ENCODE measurements at regions of chr4 and their contacts with region 1.

Region 1: GRCh38 chr4:25913851-25914669 is at the start of gene SMIM20:
- DNase-seq: peak; percentile 89
- H3K4me3 Mint-ChIP-seq: peak within 1 kb of the TSS; percentile 96
- H3K27ac Mint-ChIP-seq: peak within 1 kb of the TSS; percentile 97
- H3K4me1 Mint-ChIP-seq: peaks cover 17% of the 10 kb centered on the region
- H3K27me3 Mint-ChIP-seq: no peaks in the 10 kb centered on the region
- total RNA-seq, gene SMIM20: 28.1 to 33.2 TPM

Region 2: GRCh38 chr4:25234390-25235370 is 679.4 kb before region 1 on chr4:
- CTCF ChIA-PET with region 1: no interaction called
- intact Hi-C with region 1: loop called (anchors 1 kb)
- DNase-seq: peak; percentile 63
- H3K4me3 Mint-ChIP-seq: peak overlapping the region; percentile 92
- H3K27ac Mint-ChIP-seq: peak overlapping the region; percentile 91
- H3K4me1 Mint-ChIP-seq: peaks cover 40% of the 10 kb centered on the region
- H3K27me3 Mint-ChIP-seq: no peaks in the 10 kb centered on the region

Region 3: GRCh38 chr4:25466966-25467697 is 446.9 kb before region 1 on chr4:
- CTCF ChIA-PET with region 1: no interaction called
- intact Hi-C with region 1: no loop called
- DNase-seq: no peak
- H3K4me3 Mint-ChIP-seq: no peak overlapping the region
- H3K27ac Mint-ChIP-seq: no peak overlapping the region
- H3K4me1 Mint-ChIP-seq: no peaks in the 10 kb centered on the region
- H3K27me3 Mint-ChIP-seq: no peaks in the 10 kb centered on the region

Region 4: GRCh38 chr4:25842229-25842845 is 71.7 kb before region 1 on chr4:
- CTCF ChIA-PET with region 1: no interaction called
- intact Hi-C with region 1: loop called (anchors 5 kb)
- DNase-seq: peak; percentile 65
- H3K4me3 Mint-ChIP-seq: no peak overlapping the region
- H3K27ac Mint-ChIP-seq: no peak overlapping the region
- H3K4me1 Mint-ChIP-seq: peaks cover 40% of the 10 kb centered on the region
- H3K27me3 Mint-ChIP-seq: no peaks in the 10 kb centered on the region

Region 5: GRCh38 chr4:25938787-25939186 is 24.7 kb after region 1 on chr4:
- CTCF ChIA-PET with region 1: interaction called, 5 read pairs
- intact Hi-C with region 1: loop called (anchors 1 kb)
- DNase-seq: peak; percentile 68
- H3K4me3 Mint-ChIP-seq: no peak overlapping the region
- H3K27ac Mint-ChIP-seq: peak overlapping the region; percentile 5
- H3K4me1 Mint-ChIP-seq: peaks cover 20% of the 10 kb centered on the region
- H3K27me3 Mint-ChIP-seq: peaks cover 15% of the 10 kb centered on the region

Region 6: DNA sequence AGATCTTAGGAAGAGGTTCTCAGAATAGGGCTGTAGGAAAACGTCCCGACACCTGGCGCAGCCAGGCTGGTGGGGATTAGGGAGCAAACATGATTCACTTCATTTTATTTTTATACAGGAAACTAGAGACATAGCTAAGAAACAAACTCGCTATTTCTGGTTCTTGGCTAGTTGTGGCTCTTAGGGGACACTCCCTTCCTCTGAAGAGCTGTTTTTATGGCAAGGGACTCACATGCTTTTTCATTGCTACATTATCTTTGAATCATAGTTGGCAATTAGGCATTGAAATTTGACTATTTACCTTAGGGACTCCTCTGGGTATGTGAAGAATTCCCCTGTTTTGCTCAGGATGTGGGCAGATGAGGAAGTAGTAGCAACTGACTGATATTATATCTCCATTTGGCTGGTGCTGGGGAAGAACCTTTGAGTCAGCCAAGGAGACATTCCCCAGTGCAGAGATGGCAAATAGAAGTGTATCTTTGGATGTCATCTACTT is 174.4 kb after region 1 on chr4:
- CTCF ChIA-PET with region 1: no interaction called
- intact Hi-C with region 1: no loop called
- DNase-seq: peak; percentile 75
- H3K4me3 Mint-ChIP-seq: peak overlapping the region; percentile 19
- H3K27ac Mint-ChIP-seq: peak overlapping the region; percentile 93
- H3K4me1 Mint-ChIP-seq: peaks cover 47% of the 10 kb centered on the region
- H3K27me3 Mint-ChIP-seq: peaks cover 6% of the 10 kb centered on the region

Measured in activated naive CD4-positive, alpha-beta T cell treated with anti-CD3 and anti-CD28 coated beads for 36 hours (primary cell).